Endothelial cell of umbilical vein (primary cell): ENCODE measurements at regions of chr5 and their contacts with region 1.

Region 1: DNA sequence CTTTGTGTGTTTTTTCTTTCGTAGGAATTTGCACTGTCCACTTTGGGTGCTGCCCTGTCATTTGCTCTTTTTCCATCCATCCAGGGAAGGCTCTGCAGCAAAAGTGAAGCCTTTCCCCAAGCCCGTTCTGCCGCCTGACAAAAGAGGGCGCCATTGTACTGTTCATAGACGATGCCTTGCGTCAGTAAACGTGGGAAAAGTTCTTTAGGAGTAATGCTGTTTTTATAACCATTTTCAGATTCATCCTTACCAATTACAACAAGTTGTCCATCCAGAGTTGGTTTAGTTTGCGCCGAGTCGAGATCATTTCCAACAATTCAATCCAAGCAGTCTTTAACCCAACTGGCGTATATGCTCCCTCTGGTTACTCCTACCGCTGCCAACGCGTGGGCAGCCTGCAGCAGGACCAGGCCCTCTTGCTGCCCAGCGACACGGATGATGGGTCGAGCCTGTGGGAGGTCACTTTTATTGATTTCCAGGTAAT is 34.3 kb upstream of the RPS23 start:
- DNase-seq: peak; percentile 63
- H3K4me3 ChIP-seq: no peak overlapping the region
- H3K27ac ChIP-seq: no peak overlapping the region
- H3K4me1 ChIP-seq: peaks cover 7% of the 10 kb centered on the region
- H3K27me3 ChIP-seq: peaks cover 3 to 4% of the 10 kb centered on the region in 2 experiments
- CTCF ChIP-seq: peak; percentile 77 to 90
- POLR2A ChIP-seq: no peak

Region 2: DNA sequence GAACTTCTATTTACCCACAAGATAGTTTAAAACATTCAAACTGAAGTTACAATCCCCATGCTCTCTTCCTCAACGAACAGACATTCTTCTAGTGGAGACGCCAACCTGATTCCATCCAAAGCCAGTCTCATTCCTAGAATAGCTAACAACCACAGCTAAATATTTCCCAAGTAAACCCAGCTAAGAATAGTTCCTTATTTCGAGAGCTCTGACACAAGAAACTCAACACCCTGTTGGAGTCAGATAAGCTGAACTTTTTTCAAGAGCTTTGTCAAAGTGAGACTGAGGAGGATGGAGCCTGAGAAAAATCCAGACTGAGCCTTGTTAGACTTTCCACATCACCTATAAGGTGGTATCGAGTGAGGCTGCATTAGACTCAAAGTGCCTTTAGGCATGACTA is 22.4 kb after region 1 on chr5:
- CTCF ChIA-PET with region 1: interaction called, 10 read pairs
- POLR2A ChIA-PET with region 1: no interaction called
- dilution Hi-C with region 1: no loop called
- intact Hi-C with region 1: no loop called
- DNase-seq: no peak
- H3K4me3 ChIP-seq: no peak overlapping the region
- H3K27ac ChIP-seq: no peak overlapping the region
- H3K4me1 ChIP-seq: no peaks in the 10 kb centered on the region
- H3K27me3 ChIP-seq: peaks cover 6 to 8% of the 10 kb centered on the region in 2 experiments
- CTCF ChIP-seq: no peak
- POLR2A ChIP-seq: no peak

Region 3: DNA sequence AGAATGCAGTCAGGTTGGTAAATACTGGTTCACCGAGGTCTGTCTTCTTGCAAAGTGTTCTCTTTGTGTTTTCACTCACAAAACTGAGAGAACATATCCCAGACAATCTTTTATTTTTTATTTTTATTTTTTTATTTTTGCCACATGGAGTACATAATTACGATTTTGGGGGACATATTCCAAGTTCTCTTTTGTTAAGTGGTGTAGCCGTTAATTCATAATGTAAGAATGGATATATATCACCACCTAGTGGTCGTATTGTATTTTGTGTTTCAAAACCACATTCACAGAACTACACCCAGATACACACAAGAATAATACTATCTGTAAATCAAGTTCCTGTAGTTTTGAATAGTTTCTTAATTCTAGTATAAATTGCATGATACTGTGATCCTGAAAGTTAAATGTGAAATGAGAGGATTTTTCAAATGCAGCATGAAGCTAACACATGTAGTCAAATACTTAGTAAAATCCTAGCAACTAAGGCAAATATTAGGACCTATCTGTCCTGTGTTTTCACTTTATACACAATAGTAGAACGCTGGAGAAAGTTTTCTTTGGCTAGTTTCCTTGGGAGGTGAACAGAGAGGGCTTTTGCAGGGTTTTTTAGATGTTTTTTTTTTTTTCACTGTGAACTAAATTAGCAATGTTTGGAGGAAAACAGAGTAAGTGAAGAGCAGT is 1251.8 kb after region 1 on chr5:
- CTCF ChIA-PET with region 1: interaction called, 10 read pairs
- POLR2A ChIA-PET with region 1: no interaction called
- dilution Hi-C with region 1: no loop called
- intact Hi-C with region 1: loop called (anchors 2 kb)
- DNase-seq: peak; percentile 81
- H3K4me3 ChIP-seq: no peak overlapping the region
- H3K27ac ChIP-seq: no peak overlapping the region
- H3K4me1 ChIP-seq: peaks cover 4% of the 10 kb centered on the region
- H3K27me3 ChIP-seq: peaks cover 0 to 8% of the 10 kb centered on the region in 2 experiments
- CTCF ChIP-seq: peak; percentile 16 to 24
- POLR2A ChIP-seq: no peak

Region 4: DNA sequence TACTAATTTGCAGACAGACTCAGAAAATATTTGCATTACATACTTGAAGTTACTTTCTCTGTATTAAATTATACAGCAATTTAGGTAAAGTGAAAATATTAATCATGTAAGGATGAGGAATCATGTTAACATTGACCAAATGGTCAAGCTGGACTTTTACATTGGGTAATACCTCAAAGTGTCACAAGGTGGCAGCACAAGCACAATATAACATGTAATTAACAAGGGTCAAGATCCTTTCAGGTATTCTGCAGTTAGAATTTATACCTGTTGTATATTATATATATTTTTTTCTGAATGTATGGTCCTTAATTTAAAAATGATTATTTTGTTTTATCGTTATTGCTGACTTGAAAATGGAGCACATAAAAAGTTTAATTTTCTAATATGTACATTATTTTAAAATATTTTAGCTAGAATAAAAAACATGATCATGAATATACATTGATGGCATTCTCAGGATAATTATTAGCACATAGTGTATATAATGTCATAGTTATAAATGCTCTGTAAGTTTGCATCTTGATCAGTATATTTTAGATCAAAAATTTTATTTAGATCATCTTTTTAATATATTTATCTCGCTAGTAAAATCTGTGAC is 1399.7 kb after region 1 on chr5:
- CTCF ChIA-PET with region 1: interaction called, 7 read pairs
- POLR2A ChIA-PET with region 1: no interaction called
- dilution Hi-C with region 1: no loop called
- intact Hi-C with region 1: loop called (anchors 5 kb)
- DNase-seq: peak; percentile 64
- H3K4me3 ChIP-seq: no peak overlapping the region
- H3K27ac ChIP-seq: no peak overlapping the region
- H3K4me1 ChIP-seq: no peaks in the 10 kb centered on the region
- H3K27me3 ChIP-seq: peaks cover 2 to 6% of the 10 kb centered on the region in 2 experiments
- CTCF ChIP-seq: peak; percentile 51 to 57
- POLR2A ChIP-seq: no peak